Posterior cingulate gyrus (tissue), 11 donors: ENCODE measurements at regions of chr22 and their contacts with region 1.

Region 1: GRCh38 chr22:40346178-40347118 is at the start of gene ADSL:
- DNase-seq: peak; percentile 78 to 98 (median 87)

Region 2: GRCh38 chr22:40177738-40178416 is 168.6 kb before region 1 on chr22 and contains the start of gene TNRC6B:
- intact Hi-C with region 1: loop called (anchors 10 kb)
- DNase-seq: peak in 8 of 10 donors; percentile 54 to 93 (median 70)